Mammary epithelial cell (primary cell): ENCODE measurements at regions of chr3 and their contacts with region 1.

Region 1: DNA sequence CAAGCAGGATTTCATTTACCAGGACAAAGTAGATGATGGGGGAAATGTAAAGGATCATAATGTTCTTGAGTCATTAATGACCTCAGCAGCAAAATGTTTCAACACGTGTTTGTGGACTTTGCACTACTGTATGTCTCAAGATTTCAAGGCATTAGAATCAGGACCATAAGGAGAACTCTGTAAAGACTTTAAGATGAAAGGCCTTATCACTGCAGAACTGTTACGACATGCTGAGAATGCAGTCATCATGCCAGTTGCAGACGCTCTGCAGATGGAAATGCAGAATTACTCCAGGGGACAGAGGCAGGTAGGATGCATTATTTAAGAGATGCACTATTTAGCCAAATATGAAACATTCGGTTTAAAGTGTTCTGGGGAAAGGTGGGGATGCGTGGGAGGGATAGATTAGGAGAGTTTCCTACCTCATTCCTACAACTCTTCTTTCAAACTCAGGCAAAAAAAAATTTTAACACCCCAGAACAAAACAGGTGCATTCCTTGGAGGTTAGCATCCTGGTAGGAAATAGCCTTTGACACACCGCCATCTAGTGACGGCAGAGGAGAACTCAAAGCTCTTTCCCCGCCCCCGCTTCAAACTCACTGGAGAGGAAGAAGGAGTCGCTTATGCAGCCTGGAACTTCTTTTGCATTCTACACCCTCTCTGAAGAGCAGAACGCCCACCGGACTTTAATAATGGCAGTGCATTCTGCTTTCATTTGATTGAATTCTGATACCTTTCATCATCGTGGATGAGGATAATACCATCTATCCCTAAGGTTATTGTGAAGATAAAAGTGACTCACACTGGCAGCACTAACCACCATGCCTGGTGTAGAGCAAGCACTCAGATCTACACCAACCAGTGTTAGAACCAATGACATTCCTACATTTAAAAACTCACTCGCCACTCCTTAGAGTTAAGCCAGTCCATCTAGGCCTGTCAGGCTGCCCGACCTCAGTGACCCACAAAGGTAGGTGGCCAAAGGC is 43.1 kb upstream of the TOPAZ1 start:
- DNase-seq: peak; percentile 68
- H3K4me3 ChIP-seq: no peak overlapping the region
- H3K27ac ChIP-seq: no peak overlapping the region
- H3K4me1 ChIP-seq: peaks cover 5% of the 10 kb centered on the region
- H3K27me3 ChIP-seq: no peaks in the 10 kb centered on the region
- CTCF ChIP-seq: peak; percentile 78 to 90

Region 2: GRCh38 chr3:43223670-43224364 is 974.8 kb before region 1 on chr3:
- CTCF ChIA-PET with region 1: no interaction called
- dilution Hi-C with region 1: no loop called
- in situ Hi-C with region 1: no loop called
- intact Hi-C with region 1: loop called (anchors 5 kb)
- DNase-seq: no peak
- H3K4me3 ChIP-seq: no peak overlapping the region
- H3K27ac ChIP-seq: no peak overlapping the region
- H3K4me1 ChIP-seq: no peaks in the 10 kb centered on the region
- H3K27me3 ChIP-seq: peaks cover 2% of the 10 kb centered on the region
- CTCF ChIP-seq: peak; percentile 30 to 52

Region 3: DNA sequence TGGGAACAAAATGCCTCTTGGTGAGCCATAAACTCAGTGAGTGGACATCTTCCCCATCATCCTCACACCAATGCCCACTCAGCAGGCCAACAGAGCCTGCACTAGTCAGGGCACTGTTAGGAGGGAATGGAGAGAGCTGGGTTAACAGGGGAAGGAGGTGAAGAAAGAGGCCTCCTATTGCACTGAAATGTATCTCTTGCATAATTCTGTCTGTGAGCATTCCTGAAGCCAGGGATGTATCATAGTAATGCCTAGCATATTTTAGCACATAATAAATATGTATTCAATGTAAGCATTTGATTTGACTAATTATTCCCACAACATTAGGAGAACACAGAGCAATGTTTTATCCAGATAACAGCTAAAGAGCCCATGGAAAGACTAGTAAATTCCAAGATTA is 658.0 kb before region 1 on chr3:
- CTCF ChIA-PET with region 1: no interaction called
- dilution Hi-C with region 1: no loop called
- in situ Hi-C with region 1: loop called (anchors 25 kb)
- intact Hi-C with region 1: loop called (anchors 1 kb)
- DNase-seq: no peak
- H3K4me3 ChIP-seq: no peak overlapping the region
- H3K27ac ChIP-seq: no peak overlapping the region
- H3K4me1 ChIP-seq: no peaks in the 10 kb centered on the region
- H3K27me3 ChIP-seq: no peaks in the 10 kb centered on the region
- CTCF ChIP-seq: no peak

Region 4: GRCh38 chr3:43838877-43839276 is 359.7 kb before region 1 on chr3:
- CTCF ChIA-PET with region 1: no interaction called
- dilution Hi-C with region 1: no loop called
- in situ Hi-C with region 1: no loop called
- intact Hi-C with region 1: loop called (anchors 5 kb)
- DNase-seq: peak; percentile 14
- H3K4me3 ChIP-seq: no peak overlapping the region
- H3K27ac ChIP-seq: no peak overlapping the region
- H3K4me1 ChIP-seq: no peaks in the 10 kb centered on the region
- H3K27me3 ChIP-seq: no peaks in the 10 kb centered on the region
- CTCF ChIP-seq: peak; percentile 21 to 47

Region 5: GRCh38 chr3:43879166-43879565 is 319.4 kb before region 1 on chr3:
- CTCF ChIA-PET with region 1: no interaction called
- dilution Hi-C with region 1: no loop called
- in situ Hi-C with region 1: no loop called
- intact Hi-C with region 1: loop called (anchors 1 kb)
- DNase-seq: peak; percentile 25
- H3K4me3 ChIP-seq: no peak overlapping the region
- H3K27ac ChIP-seq: no peak overlapping the region
- H3K4me1 ChIP-seq: peaks cover 23% of the 10 kb centered on the region
- H3K27me3 ChIP-seq: no peaks in the 10 kb centered on the region
- CTCF ChIP-seq: peak; percentile 22 to 50